ENCODE measurements at regions of chr6 and their contacts with region 1.

Region 1: GRCh38 chr6:4848382-4849068 is 72.3 kb downstream of the CDYL start:
- DNase-seq: no peak
- ATAC-seq: peak; percentile 87
- H3K4me3 ChIP-seq: no peak overlapping the region
- H3K27ac ChIP-seq: no peak overlapping the region
- H3K4me1 ChIP-seq: no peaks in the 10 kb centered on the region
- H3K27me3 ChIP-seq: no peaks in the 10 kb centered on the region
- CTCF ChIP-seq: peak; percentile 38 to 60 (median 47); a peak in 5 of 6 replicates
- EP300 ChIP-seq: no peak
- POLR2A ChIP-seq: no peak
- RAD21 ChIP-seq: peak; percentile 65

Region 2: GRCh38 chr6:4805553-4806336 is 42.8 kb before region 1 on chr6:
- CTCF ChIA-PET with region 1: interaction called, 26 read pairs
- POLR2A ChIA-PET with region 1: interaction called, 4 read pairs
- RAD21 ChIA-PET with region 1: interaction called, 20 read pairs
- SMC1A ChIA-PET with region 1: interaction called, 33 read pairs
- in situ Hi-C with region 1: no loop called
- intact Hi-C with region 1: no loop called
- DNase-seq: no peak
- ATAC-seq: no peak
- H3K4me3 ChIP-seq: no peak overlapping the region
- H3K27ac ChIP-seq: no peak overlapping the region
- H3K4me1 ChIP-seq: peaks cover 46% of the 10 kb centered on the region
- H3K27me3 ChIP-seq: no peaks in the 10 kb centered on the region
- CTCF ChIP-seq: peak; percentile 48 to 70 (median 57); a peak in 5 of 6 replicates
- EP300 ChIP-seq: no peak
- POLR2A ChIP-seq: no peak
- RAD21 ChIP-seq: peak; percentile 48; the same call in 1 of the 2 replicates

Region 3: GRCh38 chr6:4872841-4873240 is 24.3 kb after region 1 on chr6:
- CTCF ChIA-PET with region 1: no interaction called
- POLR2A ChIA-PET with region 1: no interaction called
- RAD21 ChIA-PET with region 1: no interaction called
- SMC1A ChIA-PET with region 1: no interaction called
- in situ Hi-C with region 1: no loop called
- intact Hi-C with region 1: no loop called
- DNase-seq: no peak
- ATAC-seq: no peak
- H3K4me3 ChIP-seq: no peak overlapping the region
- H3K27ac ChIP-seq: no peak overlapping the region
- H3K4me1 ChIP-seq: peaks cover 12% of the 10 kb centered on the region; the same call in 1 of the 2 replicates
- H3K27me3 ChIP-seq: no peaks in the 10 kb centered on the region
- CTCF ChIP-seq: no peak
- EP300 ChIP-seq: no peak
- POLR2A ChIP-seq: no peak
- RAD21 ChIP-seq: no peak

Region 4: DNA sequence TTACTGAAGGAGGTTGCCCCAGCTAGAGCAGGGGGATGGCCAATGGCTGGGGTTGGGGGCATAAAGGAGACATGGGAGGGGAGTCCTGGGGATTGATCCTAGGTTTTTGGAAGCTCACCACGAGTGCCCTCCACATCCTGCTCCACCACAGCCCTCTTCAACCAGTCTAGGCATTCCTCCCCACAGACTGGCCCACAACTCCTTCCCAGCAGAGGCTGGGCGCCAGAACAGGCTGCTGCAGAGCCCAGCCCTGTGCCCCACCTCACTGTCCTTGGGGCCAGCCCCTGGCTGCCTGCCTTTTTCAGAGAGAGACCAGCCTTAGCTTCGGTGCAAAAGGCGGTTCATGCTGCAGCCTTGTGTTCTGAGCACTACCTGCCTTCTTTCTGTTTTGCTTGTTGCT is 138.9 kb after region 1 on chr6:
- CTCF ChIA-PET with region 1: no interaction called
- POLR2A ChIA-PET with region 1: no interaction called
- RAD21 ChIA-PET with region 1: no interaction called
- SMC1A ChIA-PET with region 1: no interaction called
- in situ Hi-C with region 1: no loop called
- intact Hi-C with region 1: no loop called
- DNase-seq: no peak
- ATAC-seq: no peak
- H3K4me3 ChIP-seq: no peak overlapping the region
- H3K27ac ChIP-seq: no peak overlapping the region
- H3K4me1 ChIP-seq: no peaks in the 10 kb centered on the region
- H3K27me3 ChIP-seq: no peaks in the 10 kb centered on the region; a peak in 1 of 4 replicates
- CTCF ChIP-seq: no peak
- EP300 ChIP-seq: no peak
- POLR2A ChIP-seq: no peak
- RAD21 ChIP-seq: no peak